ENCODE measurements at regions of chr2 and their contacts with region 1.

Region 1: GRCh38 chr2:36785179-36785795 is 88.8 kb downstream of the VIT start:
- DNase-seq: peak; percentile 65
- ATAC-seq: peak; percentile 88
- H3K4me3 ChIP-seq: no peak overlapping the region
- H3K27ac ChIP-seq: no peak overlapping the region
- H3K4me1 ChIP-seq: no peaks in the 10 kb centered on the region
- H3K27me3 ChIP-seq: peaks cover 4 to 64% of the 10 kb centered on the region in 2 experiments
- CTCF ChIP-seq: peak; percentile 89
- EP300 ChIP-seq: no peak
- POLR2A ChIP-seq: no peak
- RAD21 ChIP-seq: peak; percentile 53; the same call in 1 of the 2 replicates

Region 2: GRCh38 chr2:36539631-36540030 is 245.7 kb before region 1 on chr2:
- CTCF ChIA-PET with region 1: no interaction called
- POLR2A ChIA-PET with region 1: no interaction called
- in situ Hi-C with region 1: no loop called
- intact Hi-C with region 1: no loop called
- DNase-seq: no peak
- ATAC-seq: no peak
- H3K4me3 ChIP-seq: no peak overlapping the region
- H3K27ac ChIP-seq: no peak overlapping the region
- H3K4me1 ChIP-seq: no peaks in the 10 kb centered on the region
- H3K27me3 ChIP-seq: no peaks in the 10 kb centered on the region
- CTCF ChIP-seq: no peak
- EP300 ChIP-seq: no peak
- POLR2A ChIP-seq: no peak
- RAD21 ChIP-seq: no peak

Region 3: GRCh38 chr2:36918307-36918706 is 133.0 kb after region 1 on chr2:
- CTCF ChIA-PET with region 1: interaction called, 4 read pairs
- POLR2A ChIA-PET with region 1: no interaction called
- in situ Hi-C with region 1: no loop called
- intact Hi-C with region 1: loop called (anchors 2 kb)
- DNase-seq: no peak
- ATAC-seq: no peak
- H3K4me3 ChIP-seq: no peak overlapping the region
- H3K27ac ChIP-seq: no peak overlapping the region
- H3K4me1 ChIP-seq: peaks cover 17% of the 10 kb centered on the region
- H3K27me3 ChIP-seq: no peaks in the 10 kb centered on the region
- CTCF ChIP-seq: no peak
- EP300 ChIP-seq: no peak
- POLR2A ChIP-seq: no peak
- RAD21 ChIP-seq: no peak

Region 4: DNA sequence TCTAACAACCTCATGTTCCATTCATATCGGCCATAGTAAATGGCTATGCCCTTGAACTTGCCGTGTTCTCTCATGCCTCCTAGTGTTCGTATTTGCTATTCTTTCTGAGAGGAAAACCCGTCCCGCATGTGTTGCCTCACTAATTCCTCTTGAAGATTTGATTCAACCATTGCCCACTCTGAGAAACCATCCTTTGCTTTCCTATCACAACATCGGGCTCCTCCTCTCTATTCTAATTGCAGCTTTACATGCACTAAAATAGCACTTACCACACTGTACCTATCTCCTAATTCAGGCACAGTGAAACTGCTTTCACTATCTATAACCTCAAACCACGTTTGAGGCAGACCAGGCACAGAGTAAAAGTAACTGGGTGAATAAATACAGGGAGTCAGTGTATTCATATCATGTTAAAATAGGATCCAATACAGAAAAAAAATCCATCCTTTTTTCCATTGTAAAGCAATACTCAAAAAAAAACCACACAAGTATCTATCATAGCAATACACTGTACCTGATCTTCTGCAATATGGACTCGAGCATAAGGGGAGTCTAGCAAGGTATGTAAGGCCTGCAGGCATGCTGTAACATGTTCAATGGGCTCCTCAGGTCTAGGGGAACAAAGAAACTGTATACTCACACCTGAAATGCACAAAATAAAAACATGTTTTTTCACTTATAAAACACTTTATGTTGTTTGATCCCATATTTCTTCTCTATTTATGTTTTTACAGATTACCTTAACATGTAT is 220.0 kb after region 1 on chr2:
- CTCF ChIA-PET with region 1: interaction called, 5 read pairs
- POLR2A ChIA-PET with region 1: no interaction called
- in situ Hi-C with region 1: no loop called
- intact Hi-C with region 1: loop called (anchors 1 kb)
- DNase-seq: peak; percentile 33
- ATAC-seq: peak; percentile 63
- H3K4me3 ChIP-seq: no peak overlapping the region
- H3K27ac ChIP-seq: no peak overlapping the region
- H3K4me1 ChIP-seq: no peaks in the 10 kb centered on the region
- H3K27me3 ChIP-seq: no peaks in the 10 kb centered on the region
- CTCF ChIP-seq: peak; percentile 66
- EP300 ChIP-seq: no peak
- POLR2A ChIP-seq: no peak
- RAD21 ChIP-seq: peak; percentile 26; the same call in 1 of the 2 replicates

Region 5: DNA sequence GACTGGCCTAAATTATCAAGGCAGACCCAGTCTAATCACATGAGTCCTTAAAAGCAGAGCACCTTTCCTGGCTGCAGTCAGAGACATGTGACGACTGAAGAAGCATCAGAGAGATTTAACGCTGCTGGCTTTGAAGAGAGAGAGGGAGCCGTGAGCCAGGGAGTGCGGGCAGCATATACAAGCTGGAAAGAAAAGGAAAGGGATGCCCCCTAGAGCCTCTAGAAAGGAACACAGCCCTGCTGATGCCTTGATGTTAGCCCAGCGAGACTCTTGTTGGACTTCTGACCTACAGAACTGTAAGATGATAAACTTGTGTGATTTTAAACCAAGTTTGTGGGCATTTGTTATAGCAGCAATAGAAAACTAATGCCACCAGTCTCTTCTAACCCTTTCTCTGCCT is 240.8 kb after region 1 on chr2:
- CTCF ChIA-PET with region 1: no interaction called
- POLR2A ChIA-PET with region 1: no interaction called
- in situ Hi-C with region 1: loop called (anchors 10 kb)
- intact Hi-C with region 1: no loop called
- DNase-seq: peak; percentile 34
- ATAC-seq: peak; percentile 97
- H3K4me3 ChIP-seq: no peak overlapping the region
- H3K27ac ChIP-seq: no peak overlapping the region
- H3K4me1 ChIP-seq: no peaks in the 10 kb centered on the region
- H3K27me3 ChIP-seq: no peaks in the 10 kb centered on the region
- CTCF ChIP-seq: peak; percentile 71
- EP300 ChIP-seq: no peak
- POLR2A ChIP-seq: no peak
- RAD21 ChIP-seq: 0 out of 2 replicates have a peak, but pooled peaks have one; percentile 32

Region 6: DNA sequence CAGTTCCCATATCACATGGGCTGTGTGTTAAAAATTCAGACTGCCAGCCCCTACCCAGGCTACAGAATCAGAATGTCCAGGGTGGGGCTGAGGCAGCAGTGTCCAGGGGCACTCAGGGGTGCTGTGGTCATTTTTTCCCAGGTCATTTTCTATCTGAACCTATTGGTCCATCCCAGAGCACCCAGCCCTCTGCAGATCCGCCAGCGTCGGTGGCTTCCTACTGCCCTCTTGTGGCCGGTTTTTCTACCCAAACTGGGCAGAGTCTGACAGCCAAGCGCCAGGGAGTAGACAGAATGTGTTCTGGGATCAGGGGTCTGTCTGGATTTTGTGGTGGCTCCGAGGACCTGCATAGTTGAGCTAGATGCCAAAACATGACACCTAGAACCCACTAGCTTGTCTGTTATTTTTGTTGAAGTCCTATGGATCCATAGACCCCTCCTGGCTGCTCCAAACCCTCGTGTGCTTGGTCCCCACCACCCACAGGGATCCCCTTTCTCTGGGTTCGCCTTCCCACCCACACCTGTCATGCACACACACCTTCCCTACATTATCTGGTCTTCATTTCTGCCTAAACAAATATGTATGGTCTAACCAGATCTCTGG is 1105.7 kb after region 1 on chr2:
- CTCF ChIA-PET with region 1: no interaction called
- POLR2A ChIA-PET with region 1: no interaction called
- in situ Hi-C with region 1: loop called (anchors 25 kb)
- intact Hi-C with region 1: no loop called
- DNase-seq: peak; percentile 71
- ATAC-seq: peak; percentile 99
- H3K4me3 ChIP-seq: no peak overlapping the region
- H3K27ac ChIP-seq: no peak overlapping the region
- H3K4me1 ChIP-seq: peaks cover 5% of the 10 kb centered on the region; the same call in 1 of the 2 replicates
- H3K27me3 ChIP-seq: peaks cover 0 to 9% of the 10 kb centered on the region in 2 experiments; a peak in 2 of 5 replicates
- CTCF ChIP-seq: peak; percentile 93
- EP300 ChIP-seq: no peak
- POLR2A ChIP-seq: no peak
- RAD21 ChIP-seq: peak; percentile 81

Measured in HepG2 (cell line).